H1 (cell line): ENCODE measurements at regions of chr7 and their contacts with region 1.

Region 1: GRCh38 chr7:149714050-149714909 is 59.1 kb downstream of the ZNF467 start:
- DNase-seq: peak; percentile 65 to 90
- H3K4me3 ChIP-seq: peak overlapping the region; percentile 57 to 95 (median 80)
- H3K27ac ChIP-seq: no peak overlapping the region
- H3K4me1 ChIP-seq: peaks cover 2 to 14% (median 7%) of the 10 kb centered on the region in 4 experiments
- H3K27me3 ChIP-seq: peaks cover 0 to 11% (median 7%) of the 10 kb centered on the region in 4 experiments; a peak in 4 of 7 replicates
- CTCF ChIP-seq: no peak
- EP300 ChIP-seq: no peak
- POLR2A ChIP-seq: no peak
- RAD21 ChIP-seq: no peak

Region 2: GRCh38 chr7:149692557-149692982 is 21.7 kb before region 1 on chr7:
- CTCF ChIA-PET with region 1: no interaction called
- POLR2A ChIA-PET with region 1: no interaction called
- DNase-seq: peak in 1 of 2 experiments; percentile 75
- H3K4me3 ChIP-seq: peak overlapping the region; percentile 51 to 81 (median 68)
- H3K27ac ChIP-seq: no peak overlapping the region
- H3K4me1 ChIP-seq: peaks cover 0 to 2% (median 0%) of the 10 kb centered on the region in 4 experiments; a peak in 2 of 7 replicates
- H3K27me3 ChIP-seq: no peaks in the 10 kb centered on the region
- CTCF ChIP-seq: no peak
- EP300 ChIP-seq: no peak
- POLR2A ChIP-seq: no peak
- RAD21 ChIP-seq: no peak

Region 3: GRCh38 chr7:149729983-149730801 is 15.9 kb after region 1 on chr7:
- CTCF ChIA-PET with region 1: interaction called, 17 read pairs
- POLR2A ChIA-PET with region 1: interaction called, 5 read pairs
- DNase-seq: no peak
- H3K4me3 ChIP-seq: no peak overlapping the region
- H3K27ac ChIP-seq: no peak overlapping the region
- H3K4me1 ChIP-seq: no peaks in the 10 kb centered on the region
- H3K27me3 ChIP-seq: no peaks in the 10 kb centered on the region
- CTCF ChIP-seq: no peak
- EP300 ChIP-seq: no peak
- POLR2A ChIP-seq: no peak
- RAD21 ChIP-seq: no peak; a peak in 1 of 4 replicates